ENCODE measurements at regions of chr1 and their contacts with region 1.

Region 1: DNA sequence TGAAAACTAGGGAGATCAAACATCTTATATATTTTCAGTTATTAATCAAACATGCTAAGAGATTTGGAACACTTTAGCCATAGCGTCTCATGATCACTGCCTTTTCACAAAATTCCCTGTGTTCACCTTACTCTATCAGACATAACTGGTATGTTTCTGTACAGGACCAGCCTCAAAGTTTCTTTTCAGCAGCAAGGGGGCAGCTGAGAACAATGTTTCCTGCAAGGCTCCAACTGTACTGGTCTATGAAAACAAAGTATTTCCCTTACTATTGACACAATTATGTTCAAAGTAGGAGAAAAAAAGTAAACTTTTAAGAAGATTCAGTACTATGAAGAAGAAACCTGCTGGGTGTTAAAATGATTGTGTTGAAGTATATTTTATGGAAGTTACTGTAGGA is 98.5 kb downstream of the ATF6 start:
- DNase-seq: no peak
- H3K4me3 ChIP-seq: no peak overlapping the region
- H3K27ac ChIP-seq: no peak overlapping the region
- H3K4me1 ChIP-seq: peaks cover 0 to 28% (median 13%) of the 10 kb centered on the region in 4 donors
- H3K27me3 ChIP-seq: no peaks in the 10 kb centered on the region
- CTCF ChIP-seq: peak; percentile 32 to 45 (median 45)
- EP300 ChIP-seq: no peak
- POLR2A ChIP-seq: no peak

Region 2: DNA sequence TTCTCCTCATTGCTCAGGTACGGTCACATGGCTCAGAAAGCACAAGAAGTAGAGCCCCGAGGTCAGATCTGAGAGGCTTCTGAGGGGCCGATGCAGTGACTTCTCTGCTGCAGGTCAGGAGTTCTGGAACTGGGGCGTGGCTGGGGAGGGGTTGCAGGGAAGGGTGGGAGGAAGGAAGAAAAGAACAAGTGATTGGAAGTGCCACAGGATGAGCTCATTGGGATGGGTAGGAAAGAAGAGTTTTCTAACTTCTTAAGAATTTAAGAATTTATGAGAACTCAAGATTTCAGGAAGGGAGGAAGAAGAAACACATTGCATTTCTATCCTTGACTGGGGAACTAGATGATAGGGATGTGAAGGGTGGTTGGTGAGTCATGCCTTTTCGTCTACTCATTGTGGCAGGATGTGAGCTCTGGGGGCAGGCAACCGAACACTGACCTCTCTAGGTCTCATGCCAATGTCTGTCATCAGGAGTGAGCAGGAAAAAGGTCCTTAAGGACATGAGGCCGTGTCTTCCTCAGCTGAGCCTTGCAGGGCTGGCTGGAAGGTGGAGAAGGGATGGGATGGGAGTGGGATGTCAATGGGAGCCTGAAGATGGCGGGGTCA is 142.7 kb before region 1 on chr1:
- intact Hi-C with region 1: no loop called
- DNase-seq: no peak
- H3K4me3 ChIP-seq: no peak overlapping the region
- H3K27ac ChIP-seq: no peak overlapping the region
- H3K4me1 ChIP-seq: peaks cover 5 to 14% (median 13%) of the 10 kb centered on the region in 4 donors
- H3K27me3 ChIP-seq: peaks cover 0 to 16% (median 2%) of the 10 kb centered on the region in 4 donors
- CTCF ChIP-seq: no peak
- EP300 ChIP-seq: no peak
- POLR2A ChIP-seq: no peak

Region 3: GRCh38 chr1:161772397-161772796 is 92.2 kb before region 1 on chr1:
- intact Hi-C with region 1: no loop called
- DNase-seq: no peak
- H3K4me3 ChIP-seq: no peak overlapping the region
- H3K27ac ChIP-seq: peak overlapping the region in 2 of 4 donors; percentile 20 to 37
- H3K4me1 ChIP-seq: peaks cover 31 to 61% (median 45%) of the 10 kb centered on the region in 4 donors
- H3K27me3 ChIP-seq: no peaks in the 10 kb centered on the region
- CTCF ChIP-seq: no peak
- EP300 ChIP-seq: no peak
- POLR2A ChIP-seq: no peak

Region 4: DNA sequence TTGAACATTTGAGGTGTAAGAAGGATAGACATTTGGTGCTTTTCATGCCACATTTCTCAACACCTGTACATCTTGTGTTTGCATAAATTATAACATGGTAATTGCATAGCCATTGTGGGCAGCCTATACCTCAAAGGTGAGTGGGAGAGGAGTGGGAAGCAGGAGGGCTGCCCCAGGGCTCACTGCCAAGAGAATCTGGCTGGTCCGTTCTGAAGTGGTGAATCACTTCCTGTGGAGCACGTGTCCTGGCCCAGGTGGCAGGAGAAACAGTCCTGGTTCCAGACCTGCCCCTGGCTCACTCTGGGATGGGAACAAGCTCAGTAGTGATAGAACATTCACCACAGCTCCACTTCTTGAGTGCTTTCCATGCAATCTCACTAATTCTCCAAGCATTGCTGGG is 170.7 kb after region 1 on chr1:
- intact Hi-C with region 1: loop called (anchors 5 kb)
- DNase-seq: no peak
- H3K4me3 ChIP-seq: no peak overlapping the region
- H3K27ac ChIP-seq: no peak overlapping the region
- H3K4me1 ChIP-seq: peaks cover 0 to 8% (median 4%) of the 10 kb centered on the region in 4 donors
- H3K27me3 ChIP-seq: no peaks in the 10 kb centered on the region
- CTCF ChIP-seq: no peak
- EP300 ChIP-seq: no peak
- POLR2A ChIP-seq: no peak

Region 5: DNA sequence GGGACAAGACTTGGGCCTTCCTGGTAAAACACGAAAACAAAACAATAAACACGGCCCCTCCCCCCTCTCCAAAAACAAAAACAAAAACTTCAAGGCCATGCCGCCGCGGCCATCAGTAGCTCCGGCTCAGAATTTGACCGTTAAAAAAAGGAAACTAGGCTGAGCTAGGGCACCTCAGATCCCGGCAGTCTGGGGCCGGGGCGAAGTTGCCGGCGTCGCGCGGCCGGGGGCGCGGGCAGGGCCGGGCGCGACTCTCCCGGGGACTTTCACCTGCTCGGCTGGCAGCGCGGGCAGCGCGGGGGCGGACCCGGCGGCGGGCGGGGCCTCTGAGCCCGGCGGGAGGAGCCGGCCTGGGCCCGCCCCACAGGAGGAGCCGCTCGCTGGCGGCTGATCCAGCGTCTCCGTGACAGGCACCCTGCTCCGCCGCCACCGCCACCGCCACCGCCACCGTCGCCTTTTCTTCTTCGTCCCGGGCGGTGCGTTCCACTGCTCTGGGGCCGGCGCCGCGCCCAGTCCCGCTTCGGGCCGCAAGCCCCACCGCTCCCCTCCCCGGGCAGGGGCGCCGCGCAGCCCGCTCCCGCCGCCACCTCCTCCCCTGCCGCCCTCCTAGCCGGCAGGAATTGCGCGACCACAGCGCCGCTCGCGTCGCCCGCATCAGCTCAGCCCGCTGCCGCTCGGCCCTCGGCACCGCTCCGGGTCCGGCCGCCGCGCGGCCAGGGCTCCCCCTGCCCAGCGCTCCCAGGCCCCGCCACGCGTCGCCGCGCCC is 204.9 kb after region 1 on chr1 and contains the start of gene NOS1AP:
- intact Hi-C with region 1: no loop called
- DNase-seq: peak; percentile 92
- H3K4me3 ChIP-seq: peak within 1 kb of the TSS; percentile 73 to 93 (median 85)
- H3K27ac ChIP-seq: peak within 1 kb of the TSS; percentile 49 to 71 (median 62)
- H3K4me1 ChIP-seq: peaks cover 21 to 27% (median 24%) of the 10 kb centered on the region in 4 donors
- H3K27me3 ChIP-seq: peaks cover 0 to 37% (median 0%) of the 10 kb centered on the region in 4 donors
- CTCF ChIP-seq: no peak
- EP300 ChIP-seq: no peak
- POLR2A ChIP-seq: no peak
- total RNA-seq, gene NOS1AP: 0.99 to 9.0 (median 4.0) TPM